ENCODE measurements at regions of chr19 and their contacts with region 1.

Region 1: DNA sequence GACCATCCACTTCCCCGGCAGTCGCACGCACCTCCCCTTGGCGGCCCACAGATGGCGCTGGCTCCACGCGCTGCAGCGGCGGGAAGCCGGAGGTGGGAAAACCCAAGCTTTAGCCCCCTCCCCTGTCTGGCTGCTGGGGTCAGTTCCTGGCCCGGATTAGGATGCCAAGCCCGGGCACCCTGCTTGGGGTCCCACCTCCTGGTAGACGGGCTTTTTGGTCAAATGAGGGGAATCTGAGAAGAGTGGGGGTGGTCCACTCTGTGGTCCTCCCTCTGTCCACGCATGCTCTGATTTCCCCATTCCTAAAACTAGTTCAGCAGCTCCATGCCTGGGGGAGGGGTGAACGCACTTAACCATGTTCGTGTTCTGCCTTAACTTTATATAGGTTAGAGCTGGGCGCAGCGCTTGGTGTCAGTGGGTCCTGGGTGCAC is 8.1 kb upstream of the ADGRE2 start:
- DNase-seq: peak in 1 of 2 experiments; percentile 90
- H3K4me3 ChIP-seq: peak overlapping the region in 1 of 4 experiments; percentile 6; a peak in 3 of 8 replicates
- H3K27ac ChIP-seq: no peak overlapping the region
- H3K4me1 ChIP-seq: peaks cover 0 to 3% (median 1%) of the 10 kb centered on the region in 4 experiments; a peak in 1 of 7 replicates
- H3K27me3 ChIP-seq: no peaks in the 10 kb centered on the region
- CTCF ChIP-seq: peak; percentile 84 to 93 (median 92)
- EP300 ChIP-seq: no peak
- POLR2A ChIP-seq: no peak
- RAD21 ChIP-seq: peak; percentile 89 to 94

Region 2: DNA sequence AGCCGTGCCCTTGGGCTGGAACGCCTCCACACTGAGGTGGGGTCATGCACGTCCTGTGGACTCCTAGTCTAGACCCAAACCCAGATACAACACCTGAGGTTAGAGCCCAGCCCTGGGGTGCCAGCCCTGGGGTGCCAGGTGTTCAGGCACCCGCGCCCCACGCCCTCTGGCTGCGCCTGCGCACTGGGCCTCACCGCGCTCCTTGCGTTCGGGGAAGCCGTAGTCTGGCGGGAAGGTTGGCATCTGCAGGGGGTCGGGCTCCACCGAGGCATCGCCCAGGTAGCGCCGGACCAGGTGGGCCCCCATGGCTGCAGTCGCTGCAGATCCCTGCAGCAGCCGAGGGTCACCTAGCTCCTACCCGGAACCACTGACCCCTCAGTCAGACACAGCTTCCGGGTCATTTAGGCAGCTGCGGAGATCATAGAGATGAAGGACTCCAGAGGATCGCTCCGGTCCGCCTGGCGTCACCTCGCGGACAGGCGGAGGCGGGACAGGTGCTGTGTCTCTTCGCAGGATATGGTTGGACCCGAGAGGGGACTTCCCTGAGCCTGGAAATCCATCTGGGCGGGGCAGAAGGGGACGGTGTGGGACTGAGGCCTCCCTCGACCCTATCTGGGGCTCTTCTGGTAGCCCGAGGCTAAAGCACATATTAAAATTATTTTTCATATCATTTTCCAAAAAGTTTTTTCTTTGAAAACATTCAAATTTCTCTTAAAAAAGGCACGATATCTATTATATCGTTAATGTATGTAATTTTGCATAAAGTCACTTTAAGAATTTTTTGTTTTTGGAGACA is 214.5 kb before region 1 on chr19 and contains the start of gene NDUFB7:
- CTCF ChIA-PET with region 1: interaction called, 13 read pairs
- POLR2A ChIA-PET with region 1: interaction called, 4 read pairs
- DNase-seq: peak; percentile 85 to 87
- H3K4me3 ChIP-seq: peak within 1 kb of the TSS; percentile 50 to 98 (median 89)
- H3K27ac ChIP-seq: peak within 1 kb of the TSS; percentile 63
- H3K4me1 ChIP-seq: peaks cover 0 to 4% (median 2%) of the 10 kb centered on the region in 4 experiments; a peak in 3 of 7 replicates
- H3K27me3 ChIP-seq: no peaks in the 10 kb centered on the region
- CTCF ChIP-seq: peak; percentile 87 to 95 (median 90)
- EP300 ChIP-seq: no peak
- POLR2A ChIP-seq: peak in 1 of 2 experiments; percentile 88; a peak in 2 of 3 replicates
- RAD21 ChIP-seq: peak; percentile 32 to 38; a peak in 3 of 4 replicates
- total RNA-seq, gene NDUFB7: 151 and 161 TPM in 2 replicates

Region 3: DNA sequence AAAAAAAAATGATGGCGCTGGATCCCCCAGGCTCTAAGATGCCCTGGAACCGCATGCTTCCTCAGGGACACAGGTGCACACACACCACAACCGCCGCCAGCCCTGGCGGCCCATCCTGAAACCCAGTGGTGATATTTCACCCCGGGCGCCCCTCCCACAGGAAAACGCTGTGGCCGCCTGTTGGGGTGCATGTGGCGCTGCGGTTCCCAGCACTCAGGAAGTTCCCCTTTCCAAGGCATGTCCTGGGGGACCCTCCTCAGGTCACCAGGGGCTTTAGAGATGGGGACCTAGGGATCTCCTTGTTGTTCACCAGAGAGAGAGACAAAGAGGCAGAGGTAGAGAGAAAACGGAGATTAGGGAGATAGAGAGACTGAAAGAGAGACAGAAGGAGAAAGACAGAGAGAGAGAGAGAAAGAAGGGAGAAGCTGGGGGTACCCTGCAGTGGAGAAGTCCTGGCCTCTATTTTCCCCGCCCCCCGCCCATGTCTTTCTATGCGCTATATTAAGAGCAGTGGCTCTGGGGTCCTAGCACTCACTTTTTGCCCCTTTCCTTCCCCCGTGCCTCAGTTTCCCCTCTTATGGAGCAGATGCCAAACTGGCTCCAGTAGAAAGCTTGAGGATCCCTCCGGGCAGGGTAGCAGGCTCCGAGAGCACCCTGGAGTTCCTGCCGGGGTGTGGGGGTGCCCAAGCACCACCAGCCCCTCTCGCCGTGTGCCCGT is 10.4 kb before region 1 on chr19:
- CTCF ChIA-PET with region 1: interaction called, 13 read pairs
- POLR2A ChIA-PET with region 1: interaction called, 4 read pairs
- DNase-seq: peak in 1 of 2 experiments; percentile 60
- H3K4me3 ChIP-seq: peak overlapping the region; percentile 40 to 71 (median 48)
- H3K27ac ChIP-seq: no peak overlapping the region
- H3K4me1 ChIP-seq: peaks cover 0 to 4% (median 0%) of the 10 kb centered on the region in 4 experiments; a peak in 3 of 7 replicates
- H3K27me3 ChIP-seq: peaks cover 0 to 4% (median 0%) of the 10 kb centered on the region in 4 experiments; a peak in 1 of 7 replicates
- CTCF ChIP-seq: no peak
- EP300 ChIP-seq: no peak
- POLR2A ChIP-seq: peak in 1 of 2 experiments; percentile 1; a peak in 1 of 3 replicates
- RAD21 ChIP-seq: no peak

Region 4: GRCh38 chr19:15091901-15092753 is 305.7 kb after region 1 on chr19:
- CTCF ChIA-PET with region 1: interaction called, 11 read pairs
- POLR2A ChIA-PET with region 1: no interaction called
- DNase-seq: peak in 1 of 2 experiments; percentile 54
- H3K4me3 ChIP-seq: no peak overlapping the region
- H3K27ac ChIP-seq: no peak overlapping the region
- H3K4me1 ChIP-seq: no peaks in the 10 kb centered on the region
- H3K27me3 ChIP-seq: peaks cover 0 to 3% (median 0%) of the 10 kb centered on the region in 4 experiments; a peak in 1 of 7 replicates
- CTCF ChIP-seq: peak in 2 of 3 experiments; percentile 50 to 52; a peak in 2 of 4 replicates
- EP300 ChIP-seq: no peak
- POLR2A ChIP-seq: no peak
- RAD21 ChIP-seq: peak; percentile 69 to 73

Region 5: GRCh38 chr19:15101479-15102082 is 315.1 kb after region 1 on chr19:
- CTCF ChIA-PET with region 1: interaction called, 12 read pairs
- POLR2A ChIA-PET with region 1: no interaction called
- DNase-seq: peak in 1 of 2 experiments; percentile 87
- H3K4me3 ChIP-seq: no peak overlapping the region
- H3K27ac ChIP-seq: no peak overlapping the region
- H3K4me1 ChIP-seq: no peaks in the 10 kb centered on the region
- H3K27me3 ChIP-seq: no peaks in the 10 kb centered on the region
- CTCF ChIP-seq: peak; percentile 56 to 87 (median 74)
- EP300 ChIP-seq: no peak
- POLR2A ChIP-seq: no peak
- RAD21 ChIP-seq: peak; percentile 67 to 68

Measured in H1 (cell line).